Heart right ventricle (tissue), 16 donors: ENCODE measurements at regions of chr12 and their contacts with region 1.

Region 1: DNA sequence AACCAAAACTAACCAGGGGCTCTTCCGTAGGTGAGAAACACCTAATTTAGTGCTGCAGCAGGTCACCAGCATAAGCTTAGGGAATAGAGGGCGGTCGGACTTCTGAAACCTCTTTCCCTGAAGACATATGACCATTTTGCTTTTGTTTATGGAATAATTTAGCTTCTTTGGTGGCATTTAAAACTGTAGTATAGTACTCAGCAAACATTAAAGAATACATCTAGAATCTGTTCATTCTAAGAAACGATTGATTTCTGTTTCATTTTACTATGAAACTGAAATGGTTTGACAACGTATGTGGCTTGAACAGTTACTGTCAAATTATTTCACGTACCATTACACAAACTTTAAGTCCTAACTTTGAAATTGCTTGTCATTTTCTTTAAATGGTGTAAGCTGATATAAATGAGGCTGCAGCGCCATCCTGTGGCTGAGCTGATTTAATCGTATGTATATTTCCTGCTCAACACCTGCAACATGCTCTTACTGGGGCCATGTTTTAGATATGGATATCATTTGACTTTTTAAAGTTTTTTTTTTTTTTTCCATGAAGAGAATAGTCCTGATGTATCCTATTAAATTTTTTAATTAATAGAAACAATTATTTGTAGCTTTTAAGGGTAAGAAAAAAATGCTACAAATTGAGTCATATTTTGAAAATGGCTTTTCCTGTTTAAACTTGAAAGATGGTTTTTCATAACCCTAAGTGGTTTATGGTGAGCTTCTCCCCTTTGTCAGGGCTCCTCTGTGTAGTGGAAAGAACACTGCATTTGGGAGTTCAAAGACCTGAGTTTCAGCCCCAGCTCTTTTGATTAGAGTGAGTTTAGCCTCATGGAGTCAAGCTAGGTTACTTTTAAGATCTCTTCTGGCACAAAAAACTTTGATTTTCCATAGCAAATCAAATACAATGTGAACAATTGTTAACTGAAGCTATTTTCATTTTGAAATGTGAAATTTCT is 27.4 kb downstream of the CFAP54 start:
- DNase-seq: peak; percentile 63 to 73
- ATAC-seq: peak in 6 of 8 donors; percentile 61 to 83 (median 76)
- H3K4me3 ChIP-seq: no peak overlapping the region
- H3K27ac ChIP-seq: peak overlapping the region in 1 of 10 donors; percentile 36
- H3K4me1 ChIP-seq: peaks cover 0 to 7% (median 0%) of the 10 kb centered on the region in 9 donors
- H3K27me3 ChIP-seq: no peaks in the 10 kb centered on the region
- CTCF ChIP-seq: peak; percentile 35 to 77 (median 67)

Region 2: DNA sequence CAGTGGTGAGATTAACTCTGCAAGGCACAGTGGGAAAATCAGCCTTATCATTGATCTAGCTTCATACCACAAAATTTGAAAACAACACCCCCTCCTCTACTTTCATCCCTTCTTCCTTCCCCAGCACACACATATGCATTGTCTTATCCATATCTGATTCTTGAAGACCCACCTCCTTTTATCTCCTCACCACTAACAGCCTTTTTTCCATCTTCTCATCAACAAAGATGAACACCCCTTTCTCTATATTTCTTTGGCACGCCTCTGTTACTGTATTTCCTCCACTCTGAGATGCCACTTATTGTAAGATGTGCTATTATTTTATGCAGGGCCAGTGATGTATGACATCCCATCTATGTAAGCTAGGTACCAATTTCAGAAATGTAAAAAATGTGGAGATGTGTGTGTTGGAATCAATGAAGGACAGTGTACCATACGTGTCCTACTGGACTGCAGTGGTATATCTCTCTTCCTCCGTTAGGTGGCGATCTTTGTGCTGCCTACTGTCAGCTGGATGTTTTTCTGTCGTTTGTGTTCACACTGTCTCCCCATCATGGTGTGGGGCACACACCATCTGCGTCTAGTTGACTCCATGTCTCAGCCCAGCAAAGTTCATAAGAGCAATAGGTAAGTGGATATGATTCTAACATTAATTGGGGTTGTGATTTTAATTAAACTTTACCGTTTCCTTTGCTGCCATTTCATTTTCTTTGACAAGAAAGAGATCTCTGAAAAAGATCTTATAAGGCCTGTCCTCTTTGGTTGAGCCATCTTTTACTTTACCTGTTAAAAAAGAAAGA is 598.4 kb before region 1 on chr12:
- intact Hi-C with region 1: loop called in 4 of 10 experiments (anchors 5 to 10 kb)
- DNase-seq: peak in 1 of 2 donors; percentile 35
- ATAC-seq: peak in 6 of 8 donors; percentile 51 to 81 (median 70)
- H3K4me3 ChIP-seq: no peak overlapping the region
- H3K27ac ChIP-seq: no peak overlapping the region
- H3K4me1 ChIP-seq: no peaks in the 10 kb centered on the region
- H3K27me3 ChIP-seq: peaks cover 0 to 9% (median 0%) of the 10 kb centered on the region in 7 donors
- CTCF ChIP-seq: peak in 8 of 9 donors; percentile 55 to 88 (median 78)

Region 3: GRCh38 chr12:96061864-96062453 is 454.8 kb before region 1 on chr12:
- intact Hi-C with region 1: loop called (anchors 1 to 5 kb)
- DNase-seq: peak; percentile 37 to 80
- ATAC-seq: peak; percentile 75 to 89 (median 84)
- H3K4me3 ChIP-seq: no peak overlapping the region
- H3K27ac ChIP-seq: peak overlapping the region in 1 of 10 donors; percentile 36
- H3K4me1 ChIP-seq: peaks cover 0 to 32% (median 17%) of the 10 kb centered on the region in 9 donors
- H3K27me3 ChIP-seq: no peaks in the 10 kb centered on the region
- CTCF ChIP-seq: peak; percentile 79 to 91 (median 87)

Region 4: GRCh38 chr12:96219698-96220206 is 297.0 kb before region 1 on chr12:
- intact Hi-C with region 1: loop called in 7 of 10 experiments (anchors 5 to 10 kb)
- DNase-seq: no peak
- ATAC-seq: peak in 4 of 8 donors; percentile 10 to 57 (median 23)
- H3K4me3 ChIP-seq: no peak overlapping the region
- H3K27ac ChIP-seq: peak overlapping the region in 4 of 10 donors; percentile 8 to 60 (median 30)
- H3K4me1 ChIP-seq: peaks cover 0 to 95% (median 68%) of the 10 kb centered on the region in 9 donors
- H3K27me3 ChIP-seq: no peaks in the 10 kb centered on the region
- CTCF ChIP-seq: no peak

Region 5: GRCh38 chr12:96489103-96490056 is 27.4 kb before region 1 on chr12 and contains the start of gene CFAP54:
- intact Hi-C with region 1: loop called in 1 of 10 experiments (anchors 2 kb)
- DNase-seq: peak; percentile 93
- ATAC-seq: peak; percentile 96 to 99 (median 99)
- H3K4me3 ChIP-seq: peak within 1 kb of the TSS; percentile 39 to 74 (median 65)
- H3K27ac ChIP-seq: peak within 1 kb of the TSS in 7 of 10 donors; percentile 5 to 62 (median 47)
- H3K4me1 ChIP-seq: peaks cover 0 to 23% (median 4%) of the 10 kb centered on the region in 9 donors
- H3K27me3 ChIP-seq: no peaks in the 10 kb centered on the region
- CTCF ChIP-seq: peak; percentile 67 to 96 (median 87)
- total RNA-seq, gene CFAP54: 0.08 to 0.35 (median 0.27) TPM in 9 of 10 donors, not detected in the other

Region 6: GRCh38 chr12:96623656-96624217 is 107.0 kb after region 1 on chr12:
- intact Hi-C with region 1: no loop called
- DNase-seq: no peak
- ATAC-seq: no peak
- H3K4me3 ChIP-seq: no peak overlapping the region
- H3K27ac ChIP-seq: no peak overlapping the region
- H3K4me1 ChIP-seq: no peaks in the 10 kb centered on the region
- H3K27me3 ChIP-seq: no peaks in the 10 kb centered on the region
- CTCF ChIP-seq: no peak